Heart right ventricle (tissue), 16 donors: ENCODE measurements at regions of chr14 and their contacts with region 1.

Region 1: DNA sequence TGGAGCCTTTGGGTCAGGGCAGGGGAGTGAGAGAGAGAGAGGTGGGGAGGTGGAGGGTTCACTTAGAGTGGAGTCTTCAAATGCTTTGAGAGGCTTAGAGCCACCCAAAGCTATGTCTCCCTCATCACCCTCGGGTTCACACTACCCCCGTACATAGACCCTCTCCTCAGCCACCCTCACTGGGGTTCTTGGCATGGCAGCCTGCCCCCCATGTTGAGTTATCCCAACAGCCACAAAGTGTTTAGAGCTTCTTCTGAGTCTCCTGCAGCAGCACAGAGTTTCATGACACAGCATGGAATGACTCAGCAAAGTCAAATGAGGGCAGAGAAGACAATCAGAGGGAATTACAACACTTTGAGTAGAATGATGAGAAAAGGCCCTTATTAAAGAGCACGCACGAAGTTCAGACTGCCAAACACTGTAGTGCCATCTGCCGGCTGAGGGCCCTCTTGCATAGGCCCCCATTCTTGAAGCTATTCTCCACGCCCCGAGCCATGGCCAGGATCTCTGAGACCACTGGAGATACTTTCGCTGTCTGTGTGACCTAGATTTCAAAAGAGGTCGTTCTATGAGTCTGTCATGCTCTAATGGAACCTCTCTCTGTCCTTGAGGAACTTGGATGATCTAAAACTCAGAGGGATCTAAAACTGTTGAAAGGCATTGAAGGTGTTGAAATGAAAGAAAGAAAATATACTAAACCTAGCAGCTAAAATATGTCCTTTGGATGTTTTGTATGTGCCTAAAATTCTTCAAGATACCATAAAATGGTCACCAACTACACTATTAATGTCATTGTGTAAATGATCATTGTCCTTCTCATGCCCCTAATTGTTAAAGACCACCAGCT is 221.9 kb downstream of the PELI2 start:
- DNase-seq: peak; percentile 70 to 73
- ATAC-seq: peak; percentile 81 to 94 (median 88)
- H3K4me3 ChIP-seq: no peak overlapping the region
- H3K27ac ChIP-seq: peak overlapping the region in 3 of 10 donors; percentile 7 to 48 (median 28)
- H3K4me1 ChIP-seq: peaks cover 0 to 41% (median 30%) of the 10 kb centered on the region in 9 donors
- H3K27me3 ChIP-seq: no peaks in the 10 kb centered on the region
- CTCF ChIP-seq: peak; percentile 45 to 89 (median 85)

Region 2: DNA sequence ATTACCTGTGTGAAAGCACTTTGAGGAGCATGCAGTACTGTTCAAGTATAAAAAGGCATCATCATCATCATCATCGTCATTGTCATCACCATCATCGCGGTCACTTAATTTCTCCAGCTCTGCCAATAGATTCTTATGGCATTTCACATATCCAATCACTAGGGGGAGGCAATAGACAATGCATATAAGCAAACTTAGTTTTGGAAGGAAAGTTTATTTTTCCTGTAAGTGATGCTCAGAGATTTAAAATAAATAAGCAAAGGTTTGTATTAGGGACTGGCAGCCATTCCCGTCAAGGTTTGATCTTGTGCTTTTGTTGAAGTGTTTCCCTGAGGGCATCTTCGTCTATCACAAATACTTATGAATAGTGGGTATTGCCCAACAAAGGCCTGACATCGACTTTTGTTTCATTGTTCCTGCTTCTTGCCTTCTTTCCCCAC is 632.7 kb before region 1 on chr14:
- intact Hi-C with region 1: loop called in 8 of 10 experiments (anchors 2 to 10 kb)
- DNase-seq: no peak
- ATAC-seq: peak in 3 of 8 donors; percentile 47 to 56 (median 47)
- H3K4me3 ChIP-seq: no peak overlapping the region
- H3K27ac ChIP-seq: no peak overlapping the region
- H3K4me1 ChIP-seq: peaks cover 0 to 13% (median 5%) of the 10 kb centered on the region in 9 donors
- H3K27me3 ChIP-seq: no peaks in the 10 kb centered on the region
- CTCF ChIP-seq: peak; percentile 43 to 77 (median 66)

Region 3: DNA sequence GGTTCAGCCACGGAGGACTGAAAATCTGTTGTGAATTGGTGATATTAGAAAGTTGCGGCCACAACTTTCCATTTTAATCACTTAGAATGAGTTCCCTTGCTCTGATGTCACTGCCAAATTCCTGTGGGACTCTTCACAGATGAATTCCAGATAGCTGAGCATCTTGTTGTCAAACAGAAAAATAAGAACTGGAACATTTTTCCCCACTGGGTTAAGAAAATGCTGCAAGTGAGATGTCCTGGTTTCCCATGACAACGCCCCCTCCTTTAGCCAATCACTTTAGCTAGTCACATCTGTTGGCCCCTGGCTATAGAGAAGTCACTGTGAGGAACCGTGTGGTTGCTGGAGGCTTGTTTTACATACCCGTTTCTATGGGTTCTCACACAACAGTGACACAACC is 624.2 kb before region 1 on chr14:
- intact Hi-C with region 1: loop called in 3 of 10 experiments (anchors 2 to 10 kb)
- DNase-seq: peak in 1 of 2 donors; percentile 18
- ATAC-seq: peak in 7 of 8 donors; percentile 26 to 77 (median 65)
- H3K4me3 ChIP-seq: no peak overlapping the region
- H3K27ac ChIP-seq: peak overlapping the region in 1 of 10 donors; percentile 23
- H3K4me1 ChIP-seq: peaks cover 0 to 10% (median under 1%) of the 10 kb centered on the region in 9 donors
- H3K27me3 ChIP-seq: no peaks in the 10 kb centered on the region
- CTCF ChIP-seq: no peak

Region 4: DNA sequence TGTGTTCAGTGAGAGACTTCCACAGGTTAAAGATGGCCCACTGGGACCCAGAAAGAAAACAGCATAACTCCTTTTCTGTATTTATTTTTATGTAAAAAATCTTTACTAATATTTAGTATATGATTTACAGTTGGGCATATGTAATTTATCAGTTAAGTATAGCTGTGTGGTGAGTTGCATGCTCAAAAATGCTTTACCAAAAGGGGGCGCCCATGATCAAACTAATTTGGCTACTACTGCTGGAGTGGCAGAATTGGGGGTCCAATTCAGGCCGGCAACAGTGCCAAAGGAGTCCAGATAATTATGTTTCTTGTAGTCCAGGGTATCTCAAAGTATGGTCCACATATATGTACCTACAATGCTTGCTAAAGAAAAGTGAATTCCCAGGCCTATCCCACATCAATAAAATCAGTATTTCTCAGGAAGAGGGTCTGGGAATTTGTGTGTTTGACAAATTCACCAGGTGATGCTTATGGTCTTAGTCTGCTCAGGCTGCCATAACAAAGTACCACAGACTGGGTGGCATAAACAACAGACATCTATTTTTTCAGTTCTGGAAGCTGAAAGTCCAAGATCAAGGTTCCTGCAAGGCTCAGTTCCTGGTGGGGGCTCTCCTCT is 608.1 kb before region 1 on chr14:
- intact Hi-C with region 1: loop called in 6 of 10 experiments (anchors 5 to 10 kb)
- DNase-seq: peak in 1 of 2 donors; percentile 47
- ATAC-seq: peak in 2 of 8 donors; percentile 20 to 33
- H3K4me3 ChIP-seq: no peak overlapping the region
- H3K27ac ChIP-seq: no peak overlapping the region
- H3K4me1 ChIP-seq: no peaks in the 10 kb centered on the region
- H3K27me3 ChIP-seq: no peaks in the 10 kb centered on the region
- CTCF ChIP-seq: peak; percentile 26 to 76 (median 71)

Region 5: GRCh38 chr14:55846826-55847446 is 493.1 kb before region 1 on chr14:
- intact Hi-C with region 1: loop called in 1 of 10 experiments (anchors 10 kb)
- DNase-seq: no peak
- ATAC-seq: peak in 5 of 8 donors; percentile 19 to 64 (median 42)
- H3K4me3 ChIP-seq: no peak overlapping the region
- H3K27ac ChIP-seq: peak overlapping the region in 5 of 10 donors; percentile 6 to 63 (median 37)
- H3K4me1 ChIP-seq: peaks cover 0 to 21% (median 10%) of the 10 kb centered on the region in 9 donors
- H3K27me3 ChIP-seq: no peaks in the 10 kb centered on the region
- CTCF ChIP-seq: no peak

Region 6: GRCh38 chr14:56117765-56118610 is 222.1 kb before region 1 on chr14 and contains the start of gene PELI2:
- intact Hi-C with region 1: loop called in 6 of 10 experiments (anchors 5 to 10 kb)
- DNase-seq: peak; percentile 77 to 78
- ATAC-seq: peak; percentile 77 to 88 (median 83)
- H3K4me3 ChIP-seq: peak within 1 kb of the TSS; percentile 43 to 88 (median 79)
- H3K27ac ChIP-seq: peak within 1 kb of the TSS; percentile 83 to 94 (median 88)
- H3K4me1 ChIP-seq: peaks cover 3 to 44% (median 18%) of the 10 kb centered on the region in 9 donors
- H3K27me3 ChIP-seq: no peaks in the 10 kb centered on the region
- CTCF ChIP-seq: peak in 4 of 9 donors; percentile 15 to 31 (median 22)
- total RNA-seq, gene PELI2: 1.2 to 4.9 (median 2.3) TPM

Region 7: GRCh38 chr14:56159066-56159465 is 181.0 kb before region 1 on chr14:
- intact Hi-C with region 1: no loop called
- DNase-seq: no peak
- ATAC-seq: no peak
- H3K4me3 ChIP-seq: no peak overlapping the region
- H3K27ac ChIP-seq: no peak overlapping the region
- H3K4me1 ChIP-seq: peaks cover 0 to 16% (median 0%) of the 10 kb centered on the region in 9 donors
- H3K27me3 ChIP-seq: no peaks in the 10 kb centered on the region
- CTCF ChIP-seq: no peak

Region 8: GRCh38 chr14:56358851-56359614 is 19.0 kb after region 1 on chr14:
- intact Hi-C with region 1: no loop called
- DNase-seq: no peak
- ATAC-seq: no peak
- H3K4me3 ChIP-seq: no peak overlapping the region
- H3K27ac ChIP-seq: no peak overlapping the region
- H3K4me1 ChIP-seq: peaks cover 0 to 10% (median 0%) of the 10 kb centered on the region in 9 donors
- H3K27me3 ChIP-seq: no peaks in the 10 kb centered on the region
- CTCF ChIP-seq: no peak

Region 9: DNA sequence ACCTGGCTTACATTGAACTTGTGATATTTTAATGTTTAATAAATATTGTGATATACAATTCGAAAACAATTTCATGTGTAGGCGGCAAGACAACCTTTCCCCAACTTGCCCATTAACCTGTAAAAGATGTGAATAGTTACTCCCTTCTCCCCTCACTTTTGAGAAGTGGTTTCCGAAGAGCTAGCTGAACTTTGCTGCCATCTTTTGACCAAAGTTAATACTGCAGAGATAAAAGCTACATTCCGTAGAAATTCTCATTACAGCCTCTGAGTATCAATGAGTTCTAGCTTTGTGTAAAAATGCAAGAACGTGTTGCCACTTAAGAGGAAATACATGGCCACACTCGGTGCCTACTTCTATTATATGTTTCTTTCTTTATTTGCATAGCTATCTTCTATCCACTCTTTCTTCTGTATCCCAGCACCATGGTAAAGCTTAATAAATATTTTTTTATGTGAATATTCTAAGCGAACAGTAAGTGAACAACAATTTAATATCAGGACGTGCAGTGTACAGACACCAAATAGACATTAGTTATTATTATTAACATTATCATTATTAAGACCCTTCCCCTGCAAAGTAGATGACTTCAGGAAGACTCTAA is 134.4 kb after region 1 on chr14:
- intact Hi-C with region 1: loop called in 1 of 10 experiments (anchors 10 kb)
- DNase-seq: no peak
- ATAC-seq: peak in 2 of 8 donors; percentile 16 to 56
- H3K4me3 ChIP-seq: no peak overlapping the region
- H3K27ac ChIP-seq: no peak overlapping the region
- H3K4me1 ChIP-seq: no peaks in the 10 kb centered on the region
- H3K27me3 ChIP-seq: peaks cover 0 to 6% (median 0%) of the 10 kb centered on the region in 7 donors
- CTCF ChIP-seq: peak; percentile 71 to 92 (median 84)